ENCODE measurements at regions of chr4 and their contacts with region 1.

Region 1: GRCh38 chr4:700587-701264 is 4.9 kb upstream of the PCGF3 start:
- DNase-seq: no peak
- H3K4me3 Mint-ChIP-seq: no peak overlapping the region
- H3K27ac Mint-ChIP-seq: peak overlapping the region; percentile 12
- H3K4me1 Mint-ChIP-seq: peaks cover 24% of the 10 kb centered on the region
- H3K27me3 Mint-ChIP-seq: peaks cover 21% of the 10 kb centered on the region

Region 2: GRCh38 chr4:683982-684622 is 16.6 kb before region 1 on chr4:
- CTCF ChIA-PET with region 1: interaction called, 17 read pairs
- DNase-seq: peak; percentile 60
- H3K4me3 Mint-ChIP-seq: no peak overlapping the region
- H3K27ac Mint-ChIP-seq: no peak overlapping the region
- H3K4me1 Mint-ChIP-seq: peaks cover 6% of the 10 kb centered on the region
- H3K27me3 Mint-ChIP-seq: peaks cover 38% of the 10 kb centered on the region

Measured in activated naive CD4-positive, alpha-beta T cell treated with anti-CD3 and anti-CD28 coated beads, Interleukin-2, amount 10 ng/mL, durations not matched to agents 7 days and 5 days (primary cell).